ENCODE measurements at regions of chr1 and their contacts with region 1.

Region 1: DNA sequence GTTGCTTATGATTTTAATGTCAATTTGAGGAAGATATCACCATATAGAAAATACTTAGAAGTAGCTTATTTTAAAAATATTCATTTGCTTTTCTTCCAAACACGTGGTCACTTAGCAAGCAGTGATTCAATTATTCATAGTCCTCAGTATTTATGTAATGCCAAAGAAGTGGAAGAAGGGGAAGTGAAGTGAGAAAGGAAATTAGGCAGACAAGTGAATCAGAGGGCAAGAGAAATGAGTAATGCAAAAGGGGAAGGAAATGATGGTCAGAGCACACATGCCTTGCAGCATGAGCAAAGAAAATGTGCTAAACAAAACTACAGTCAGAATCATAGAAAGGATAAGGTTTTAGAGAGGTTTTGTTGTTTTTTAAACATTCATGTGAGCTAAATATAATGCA is 31.8 kb downstream of the SDCCAG8 start:
- DNase-seq: peak; percentile 74
- ATAC-seq: peak; percentile 91
- H3K4me3 ChIP-seq: no peak overlapping the region
- H3K4me3 Mint-ChIP-seq: peak overlapping the region; percentile 52
- H3K27ac ChIP-seq: peak overlapping the region; percentile 71 to 86
- H3K27ac Mint-ChIP-seq: peak overlapping the region; percentile 90
- H3K4me1 ChIP-seq: peaks cover 27 to 31% of the 10 kb centered on the region in 2 donors
- H3K4me1 Mint-ChIP-seq: peaks cover 51% of the 10 kb centered on the region
- H3K27me3 ChIP-seq: no peaks in the 10 kb centered on the region
- H3K27me3 Mint-ChIP-seq: no peaks in the 10 kb centered on the region
- CTCF ChIP-seq: no peak

Region 2: GRCh38 chr1:243267914-243268653 is 19.6 kb before region 1 on chr1:
- CTCF ChIA-PET with region 1: interaction called, 6 read pairs
- POLR2A ChIA-PET with region 1: no interaction called
- intact Hi-C with region 1: loop called (anchors 2 kb)
- DNase-seq: peak; percentile 40
- ATAC-seq: peak; percentile 52
- H3K4me3 ChIP-seq: peak overlapping the region in 1 of 5 experiments; percentile 35
- H3K4me3 Mint-ChIP-seq: peak overlapping the region; percentile 75
- H3K27ac ChIP-seq: peak overlapping the region in 1 of 2 donors; percentile 61
- H3K27ac Mint-ChIP-seq: peak overlapping the region; percentile 62
- H3K4me1 ChIP-seq: peaks cover 31 to 34% of the 10 kb centered on the region in 2 donors
- H3K4me1 Mint-ChIP-seq: peaks cover 44% of the 10 kb centered on the region
- H3K27me3 ChIP-seq: no peaks in the 10 kb centered on the region
- H3K27me3 Mint-ChIP-seq: no peaks in the 10 kb centered on the region
- CTCF ChIP-seq: no peak

Region 3: GRCh38 chr1:243312952-243313634 is 25.4 kb after region 1 on chr1:
- CTCF ChIA-PET with region 1: interaction called, 3 read pairs
- POLR2A ChIA-PET with region 1: no interaction called
- intact Hi-C with region 1: loop called (anchors 1 kb)
- DNase-seq: peak; percentile 71
- ATAC-seq: peak; percentile 71
- H3K4me3 ChIP-seq: no peak overlapping the region
- H3K4me3 Mint-ChIP-seq: peak overlapping the region; percentile 70
- H3K27ac ChIP-seq: peak overlapping the region; percentile 50 to 77
- H3K27ac Mint-ChIP-seq: peak overlapping the region; percentile 86
- H3K4me1 ChIP-seq: peaks cover 18 to 20% of the 10 kb centered on the region in 2 donors
- H3K4me1 Mint-ChIP-seq: peaks cover 25% of the 10 kb centered on the region
- H3K27me3 ChIP-seq: no peaks in the 10 kb centered on the region
- H3K27me3 Mint-ChIP-seq: no peaks in the 10 kb centered on the region
- CTCF ChIP-seq: no peak

Region 4: DNA sequence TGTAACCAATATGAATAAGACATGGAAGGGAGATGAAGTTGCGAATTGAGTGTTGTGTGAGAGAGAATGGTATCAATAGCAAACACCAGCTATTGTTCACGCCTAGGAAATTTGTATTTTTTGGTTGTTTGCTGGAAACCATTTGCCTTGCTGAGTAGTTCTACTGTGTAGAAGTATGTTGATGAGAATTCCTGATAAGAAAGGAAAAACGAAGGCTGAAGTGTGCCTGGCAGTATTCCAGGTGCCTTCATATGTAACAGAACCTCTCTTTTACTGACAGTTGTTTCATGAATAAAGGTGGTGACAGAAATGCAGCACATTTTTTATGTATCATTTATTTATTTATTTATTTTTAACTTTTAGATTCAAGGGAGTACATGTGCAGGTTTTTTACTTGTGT is 47.6 kb after region 1 on chr1:
- CTCF ChIA-PET with region 1: no interaction called
- POLR2A ChIA-PET with region 1: no interaction called
- intact Hi-C with region 1: no loop called
- DNase-seq: no peak
- ATAC-seq: no peak
- H3K4me3 ChIP-seq: no peak overlapping the region
- H3K4me3 Mint-ChIP-seq: no peak overlapping the region
- H3K27ac ChIP-seq: no peak overlapping the region
- H3K27ac Mint-ChIP-seq: no peak overlapping the region
- H3K4me1 ChIP-seq: no peaks in the 10 kb centered on the region
- H3K4me1 Mint-ChIP-seq: peaks cover 4% of the 10 kb centered on the region
- H3K27me3 ChIP-seq: no peaks in the 10 kb centered on the region
- H3K27me3 Mint-ChIP-seq: no peaks in the 10 kb centered on the region
- CTCF ChIP-seq: no peak

Measured in B cell (primary cell).